Uterus (tissue), 4 donors: ENCODE measurements at regions of chrX and their contacts with region 1.

Region 1: DNA sequence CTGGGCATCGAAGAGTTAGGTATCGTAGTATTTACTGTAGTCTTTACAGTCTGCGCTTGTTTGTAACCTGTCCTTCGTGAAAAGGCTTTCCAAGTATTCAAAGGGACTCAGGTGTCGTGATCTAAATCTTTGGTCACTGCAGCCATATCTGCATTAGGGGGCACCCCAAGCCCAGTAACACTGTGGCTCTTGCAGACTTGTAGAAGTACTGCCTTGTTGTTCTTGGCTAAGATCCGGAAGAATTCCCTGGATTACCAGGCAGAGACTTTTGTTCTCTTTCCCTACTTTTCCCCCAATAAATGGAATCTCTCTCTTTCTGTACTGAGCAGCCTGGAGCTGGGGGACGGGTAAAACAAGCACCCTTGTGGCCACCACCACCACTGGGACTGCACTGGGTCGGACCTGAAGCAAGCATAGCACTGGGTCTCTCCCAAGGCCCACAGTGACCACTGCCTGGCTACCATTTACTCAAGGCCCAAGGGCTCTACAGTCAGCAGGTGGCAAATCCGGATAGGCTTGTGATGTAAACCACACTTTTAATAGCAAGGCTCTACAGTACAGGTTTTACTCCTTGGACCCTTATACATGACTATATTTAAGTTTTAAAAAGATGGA is 12.0 kb downstream of the CXorf58 start:
- DNase-seq: no peak
- H3K4me3 ChIP-seq: no peak overlapping the region
- H3K27ac ChIP-seq: no peak overlapping the region
- H3K4me1 ChIP-seq: no peaks in the 10 kb centered on the region
- H3K27me3 ChIP-seq: no peaks in the 10 kb centered on the region
- CTCF ChIP-seq: no peak
- POLR2A ChIP-seq: no peak

Region 2: DNA sequence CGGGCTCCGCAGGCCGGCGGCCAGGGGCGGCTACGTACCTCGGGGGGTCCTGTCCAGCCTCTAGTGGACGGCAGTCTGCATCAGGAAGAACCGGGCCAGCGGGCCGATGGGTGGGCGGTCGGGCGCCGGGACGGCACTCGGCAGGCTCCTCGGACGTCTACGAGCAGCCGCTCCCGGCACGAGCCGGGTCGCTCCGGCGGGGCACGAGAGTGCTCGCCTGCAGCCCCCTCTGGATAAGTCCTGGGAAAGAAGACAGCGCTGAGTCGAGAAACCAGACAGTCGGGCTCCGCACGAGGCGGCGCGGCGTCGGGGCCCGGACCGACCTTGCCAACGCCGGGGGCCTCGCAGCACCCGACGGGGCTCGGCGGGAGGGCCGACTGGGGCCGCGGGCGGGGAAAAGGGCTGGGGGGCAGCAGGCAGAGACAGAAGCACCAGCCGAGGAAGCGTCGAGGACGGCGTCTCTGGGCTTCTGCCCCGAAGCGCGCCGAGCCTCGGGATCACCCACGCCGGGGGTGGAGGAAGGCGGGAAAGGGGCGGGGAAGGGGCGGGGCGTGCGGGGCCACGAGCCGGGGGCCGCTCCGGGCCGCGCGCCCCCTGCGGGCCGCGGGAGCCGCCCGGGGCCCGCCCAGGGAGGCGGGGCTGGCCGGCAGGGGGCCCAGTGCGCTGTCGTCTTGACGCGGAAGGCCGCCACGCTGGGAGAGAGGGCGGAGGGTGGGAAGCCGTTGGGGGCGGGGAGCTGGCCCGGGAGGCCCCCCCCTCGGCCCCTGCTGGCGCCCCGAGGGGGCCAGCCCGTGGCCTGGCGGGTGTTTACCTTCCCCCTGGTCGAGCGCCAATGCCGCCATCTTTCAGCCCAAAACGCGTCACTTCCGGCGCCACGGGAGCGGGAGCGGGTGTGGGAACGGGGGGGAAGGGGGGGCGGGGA is 105.3 kb after region 1 on chrX:
- intact Hi-C with region 1: loop called (anchors 10 kb)
- DNase-seq: peak; percentile 86 to 91
- H3K4me3 ChIP-seq: peak overlapping the region; percentile 54 to 74
- H3K27ac ChIP-seq: peak overlapping the region; percentile 92 to 97
- H3K4me1 ChIP-seq: no peaks in the 10 kb centered on the region
- H3K27me3 ChIP-seq: peaks cover 0 to 4% of the 10 kb centered on the region in 2 donors
- CTCF ChIP-seq: peak in 2 of 4 experiments; percentile 24 to 39
- POLR2A ChIP-seq: peak; percentile 66 to 83